Calu3 (cell line): ENCODE measurements at regions of chr13 and their contacts with region 1.

Region 1: DNA sequence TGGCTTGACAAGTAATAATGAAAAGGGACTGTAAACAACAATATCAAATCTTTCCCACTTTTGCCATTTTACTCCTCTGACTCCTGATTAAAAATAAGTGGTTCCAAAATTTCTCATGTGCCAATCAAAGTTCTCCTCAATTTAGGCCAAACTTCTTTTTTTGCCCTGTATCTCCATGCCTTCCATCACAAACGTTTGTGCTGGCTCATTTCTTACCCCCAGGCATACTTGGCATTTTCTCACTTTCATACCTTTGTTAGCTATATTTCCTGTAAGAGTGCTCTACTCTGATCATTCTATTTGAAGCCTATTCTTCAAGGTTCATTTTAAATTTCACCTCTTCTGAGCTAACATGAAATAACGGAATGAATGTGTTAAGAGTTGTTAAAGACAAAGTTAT is 10.0 kb upstream of the FNDC3A start:
- DNase-seq: no peak
- H3K4me3 Mint-ChIP-seq: no peak overlapping the region
- H3K27ac Mint-ChIP-seq: no peak overlapping the region
- H3K4me1 Mint-ChIP-seq: no peaks in the 10 kb centered on the region
- H3K27me3 Mint-ChIP-seq: no peaks in the 10 kb centered on the region
- CTCF ChIP-seq: no peak

Region 2: DNA sequence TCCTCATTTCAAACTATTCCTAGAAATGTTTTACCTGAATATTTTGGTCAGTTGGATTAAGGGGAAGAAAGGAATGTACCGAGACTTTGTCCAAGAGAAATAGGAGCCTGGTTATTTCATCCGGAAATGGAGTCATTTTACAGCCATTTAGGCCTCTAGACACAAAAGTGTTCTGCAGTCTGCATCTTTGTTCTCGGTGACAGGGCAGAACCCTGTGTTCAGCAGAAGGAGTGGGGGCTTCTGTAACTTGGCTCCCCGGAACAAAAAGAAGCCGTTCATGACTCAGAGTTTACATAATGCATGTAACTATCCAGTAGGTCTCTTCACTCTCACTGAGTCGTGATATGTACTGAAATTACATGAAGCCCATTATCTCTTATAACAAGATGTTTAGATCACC is 11.7 kb before region 1 on chr13:
- CTCF ChIA-PET with region 1: no interaction called
- intact Hi-C with region 1: loop called (anchors 1 kb)
- DNase-seq: no peak
- H3K4me3 Mint-ChIP-seq: no peak overlapping the region
- H3K27ac Mint-ChIP-seq: no peak overlapping the region
- H3K4me1 Mint-ChIP-seq: peaks cover 11% of the 10 kb centered on the region
- H3K27me3 Mint-ChIP-seq: no peaks in the 10 kb centered on the region
- CTCF ChIP-seq: no peak

Region 3: DNA sequence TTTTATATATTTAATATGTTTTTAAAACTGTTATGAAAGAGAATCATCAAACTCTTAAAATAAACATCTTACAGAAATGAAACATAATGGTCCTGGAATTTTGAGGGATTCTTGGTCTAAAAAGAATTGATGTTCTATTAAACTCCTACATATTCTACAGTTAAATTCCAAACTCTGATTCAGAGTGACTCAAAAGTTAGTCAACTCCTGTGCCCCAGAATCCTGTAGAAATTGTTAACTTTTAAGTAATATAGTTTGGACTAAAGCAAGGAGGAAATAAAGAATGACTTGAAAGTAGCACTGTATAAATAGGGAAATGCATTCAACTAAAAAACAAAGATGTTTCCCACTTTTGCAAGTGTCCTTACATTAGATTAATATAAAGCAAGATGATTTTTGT is 57.7 kb after region 1 on chr13:
- CTCF ChIA-PET with region 1: no interaction called
- intact Hi-C with region 1: no loop called
- DNase-seq: no peak
- H3K4me3 Mint-ChIP-seq: no peak overlapping the region
- H3K27ac Mint-ChIP-seq: no peak overlapping the region
- H3K4me1 Mint-ChIP-seq: no peaks in the 10 kb centered on the region
- H3K27me3 Mint-ChIP-seq: no peaks in the 10 kb centered on the region
- CTCF ChIP-seq: no peak